ENCODE measurements at regions of chr1 and their contacts with region 1.

Region 1: GRCh38 chr1:153805042-153805745 is 30.0 kb downstream of the SLC27A3 start:
- DNase-seq: peak; percentile 87
- H3K4me3 Mint-ChIP-seq: peak overlapping the region; percentile 5
- H3K27ac Mint-ChIP-seq: peak overlapping the region; percentile 81
- H3K4me1 Mint-ChIP-seq: peaks cover 30% of the 10 kb centered on the region
- H3K27me3 Mint-ChIP-seq: no peaks in the 10 kb centered on the region

Region 2: DNA sequence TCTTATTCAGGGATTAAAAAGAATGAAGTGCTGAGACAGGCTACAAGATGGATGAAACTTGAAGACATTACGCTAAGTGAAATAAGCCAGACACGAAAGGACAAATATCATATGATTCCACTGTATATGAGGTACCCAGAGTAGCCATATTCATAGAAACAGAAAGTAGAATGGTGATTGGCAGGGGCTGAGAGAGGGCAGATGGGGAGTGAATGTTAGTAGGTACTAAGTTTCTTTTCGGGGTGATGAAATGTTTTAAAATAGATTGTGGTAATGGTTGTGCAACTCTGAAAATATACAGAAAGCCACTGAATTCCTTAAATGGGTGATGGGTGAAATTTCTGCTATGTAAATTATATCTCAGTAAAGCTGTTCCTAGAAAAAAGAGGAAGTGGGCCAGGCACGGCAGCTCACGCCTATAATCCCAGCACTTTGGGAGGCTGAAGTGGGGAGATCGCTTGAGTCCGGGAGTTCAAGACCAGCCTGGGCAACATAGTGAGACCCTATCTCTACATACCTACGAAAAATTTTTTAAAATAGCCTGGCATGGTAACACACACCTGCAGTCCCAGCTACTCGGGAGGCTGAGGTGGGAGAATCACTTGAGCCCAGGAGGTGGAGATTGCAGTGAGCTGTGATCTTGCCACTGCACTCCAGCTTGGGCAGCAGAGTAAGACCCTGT is 14.1 kb before region 1 on chr1:
- CTCF ChIA-PET with region 1: interaction called, 3 read pairs
- POLR2A ChIA-PET with region 1: no interaction called
- intact Hi-C with region 1: loop called (anchors 2 kb)
- DNase-seq: peak; percentile 40
- H3K4me3 Mint-ChIP-seq: peak overlapping the region; percentile 7
- H3K27ac Mint-ChIP-seq: peak overlapping the region; percentile 42
- H3K4me1 Mint-ChIP-seq: peaks cover 26% of the 10 kb centered on the region
- H3K27me3 Mint-ChIP-seq: peaks cover 5% of the 10 kb centered on the region

Region 3: GRCh38 chr1:153849487-153850185 is 44.4 kb after region 1 on chr1:
- CTCF ChIA-PET with region 1: no interaction called
- POLR2A ChIA-PET with region 1: interaction called, 3 read pairs
- intact Hi-C with region 1: loop called (anchors 5 kb)
- DNase-seq: peak; percentile 56
- H3K4me3 Mint-ChIP-seq: no peak overlapping the region
- H3K27ac Mint-ChIP-seq: peak overlapping the region; percentile 83
- H3K4me1 Mint-ChIP-seq: peaks cover 35% of the 10 kb centered on the region
- H3K27me3 Mint-ChIP-seq: no peaks in the 10 kb centered on the region

Region 4: GRCh38 chr1:153946622-153947241 is 141.5 kb after region 1 on chr1 and contains the start of gene DENND4B:
- CTCF ChIA-PET with region 1: interaction called, 7 read pairs
- POLR2A ChIA-PET with region 1: interaction called, 3 read pairs
- intact Hi-C with region 1: loop called (anchors 2 kb)
- DNase-seq: peak; percentile 83
- H3K4me3 Mint-ChIP-seq: peak within 1 kb of the TSS; percentile 92
- H3K27ac Mint-ChIP-seq: peak within 1 kb of the TSS; percentile 97
- H3K4me1 Mint-ChIP-seq: peaks cover 25% of the 10 kb centered on the region
- H3K27me3 Mint-ChIP-seq: no peaks in the 10 kb centered on the region
- total RNA-seq, gene DENND4B: 98.1 to 108 TPM

Region 5: DNA sequence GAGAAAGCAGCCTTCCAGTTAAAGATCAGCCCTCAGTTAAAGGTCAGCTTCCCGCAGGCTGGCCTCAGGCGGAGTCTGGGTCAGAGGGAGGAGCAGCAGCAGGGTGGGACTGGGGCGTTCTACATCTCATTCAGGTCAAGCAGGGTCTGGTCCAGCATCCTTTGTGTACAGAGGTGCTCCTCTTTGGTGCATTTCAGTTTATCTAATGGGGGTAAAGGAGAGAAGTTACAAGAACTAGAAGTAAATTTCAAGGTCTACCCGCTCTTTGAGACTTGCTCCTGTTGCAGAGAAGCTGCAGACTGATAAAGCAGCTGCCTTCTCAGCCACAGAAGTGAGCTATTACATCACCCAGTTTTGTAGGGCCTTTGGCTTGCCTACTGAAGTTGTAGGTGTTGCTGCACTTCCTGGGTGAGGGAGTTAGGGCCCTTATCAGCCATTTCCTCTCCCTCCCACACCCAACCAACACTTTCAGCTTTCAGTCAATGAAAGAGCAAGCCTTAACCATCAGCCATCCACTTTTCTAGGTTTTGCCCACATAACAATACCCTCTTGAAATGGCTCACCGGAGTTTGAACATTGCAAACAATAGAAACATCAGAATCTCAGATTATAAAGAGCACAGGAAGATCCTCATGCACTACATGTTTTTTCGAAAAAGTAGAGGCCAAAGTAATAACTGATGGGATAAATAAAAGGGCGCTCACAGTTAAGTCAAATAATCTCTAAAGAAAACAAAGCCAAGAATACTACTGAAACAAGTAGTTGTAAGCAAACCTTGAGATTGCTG is 352.5 kb after region 1 on chr1:
- CTCF ChIA-PET with region 1: no interaction called
- POLR2A ChIA-PET with region 1: no interaction called
- intact Hi-C with region 1: loop called (anchors 5 kb)
- DNase-seq: peak; percentile 83
- H3K4me3 Mint-ChIP-seq: peak overlapping the region; percentile 47
- H3K27ac Mint-ChIP-seq: peak overlapping the region; percentile 85
- H3K4me1 Mint-ChIP-seq: peaks cover 69% of the 10 kb centered on the region
- H3K27me3 Mint-ChIP-seq: no peaks in the 10 kb centered on the region